Right ventricle myocardium superior (tissue), 1 donor: ENCODE measurements at regions of chr11 and their contacts with region 1.

Region 1: DNA sequence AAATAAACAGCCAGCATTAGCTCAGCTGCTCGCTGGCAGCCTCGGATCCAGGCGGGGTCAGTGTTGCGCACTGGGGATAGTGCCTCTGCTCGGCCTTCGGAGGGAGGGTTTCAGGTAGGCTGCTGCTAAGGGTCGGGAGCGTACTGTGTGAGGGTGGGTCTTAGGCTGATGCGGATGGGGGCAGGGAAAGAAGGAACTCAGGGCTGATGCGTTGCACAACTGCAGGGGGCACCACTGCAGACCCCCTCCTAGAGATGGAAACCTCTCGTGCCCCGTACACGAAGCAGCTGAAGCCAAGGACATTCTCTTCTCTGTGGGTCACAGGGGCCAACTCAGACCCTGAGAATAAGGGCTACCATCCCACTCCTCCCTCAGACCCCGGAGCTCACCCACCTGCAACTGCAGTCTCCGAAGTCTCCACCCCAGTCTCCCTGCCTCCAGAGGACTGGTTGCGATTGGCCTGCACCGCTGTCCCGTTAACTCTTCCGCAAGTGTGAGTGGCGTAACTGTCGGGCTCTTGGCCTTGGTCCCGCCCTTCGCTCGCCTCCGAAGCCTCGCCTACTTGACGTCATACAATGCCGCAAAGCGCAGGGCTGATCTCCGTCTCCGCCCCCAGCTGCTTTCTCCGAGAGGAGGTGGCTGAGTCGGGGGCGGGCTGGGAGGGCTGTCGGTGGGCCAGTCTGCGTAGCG is at the start of gene KBTBD3:
- DNase-seq: peak; percentile 99
- ATAC-seq: peak; percentile 97
- total RNA-seq, gene KBTBD3: 7.6 TPM

Region 2: DNA sequence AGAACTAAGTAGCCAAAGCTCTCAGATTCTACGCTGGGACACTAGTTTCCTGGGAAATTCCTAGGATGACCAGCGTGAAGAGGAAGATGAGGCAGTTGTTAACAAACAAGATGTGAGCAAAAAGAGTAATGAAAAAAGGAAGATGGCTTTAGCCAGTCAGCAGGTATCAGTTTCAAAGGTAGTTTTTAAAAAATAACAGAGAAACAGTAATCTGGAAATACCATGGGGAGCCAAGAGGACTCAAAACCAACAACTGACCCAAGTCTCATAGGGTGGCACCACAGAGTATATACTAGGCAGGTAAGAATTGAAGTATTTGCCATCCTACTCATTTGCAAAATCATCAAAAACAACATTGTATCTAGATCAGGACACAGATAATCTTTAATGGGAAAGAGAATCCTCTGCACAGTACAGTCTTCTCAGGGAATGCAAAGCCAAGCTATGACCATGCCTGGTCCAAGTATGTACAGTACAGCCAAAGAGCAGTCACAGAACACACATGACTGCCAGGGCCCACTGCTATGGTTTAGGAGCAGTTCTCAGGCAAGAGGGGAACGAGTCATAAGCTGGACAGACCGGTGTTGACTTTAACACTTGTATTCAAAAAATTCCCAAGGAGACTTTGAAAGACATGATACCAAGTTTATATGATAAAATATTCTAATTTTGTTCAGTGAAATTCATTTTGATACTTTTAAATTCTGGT is 75.6 kb before region 1 on chr11:
- intact Hi-C with region 1: no loop called
- DNase-seq: no peak
- ATAC-seq: no peak

Region 3: DNA sequence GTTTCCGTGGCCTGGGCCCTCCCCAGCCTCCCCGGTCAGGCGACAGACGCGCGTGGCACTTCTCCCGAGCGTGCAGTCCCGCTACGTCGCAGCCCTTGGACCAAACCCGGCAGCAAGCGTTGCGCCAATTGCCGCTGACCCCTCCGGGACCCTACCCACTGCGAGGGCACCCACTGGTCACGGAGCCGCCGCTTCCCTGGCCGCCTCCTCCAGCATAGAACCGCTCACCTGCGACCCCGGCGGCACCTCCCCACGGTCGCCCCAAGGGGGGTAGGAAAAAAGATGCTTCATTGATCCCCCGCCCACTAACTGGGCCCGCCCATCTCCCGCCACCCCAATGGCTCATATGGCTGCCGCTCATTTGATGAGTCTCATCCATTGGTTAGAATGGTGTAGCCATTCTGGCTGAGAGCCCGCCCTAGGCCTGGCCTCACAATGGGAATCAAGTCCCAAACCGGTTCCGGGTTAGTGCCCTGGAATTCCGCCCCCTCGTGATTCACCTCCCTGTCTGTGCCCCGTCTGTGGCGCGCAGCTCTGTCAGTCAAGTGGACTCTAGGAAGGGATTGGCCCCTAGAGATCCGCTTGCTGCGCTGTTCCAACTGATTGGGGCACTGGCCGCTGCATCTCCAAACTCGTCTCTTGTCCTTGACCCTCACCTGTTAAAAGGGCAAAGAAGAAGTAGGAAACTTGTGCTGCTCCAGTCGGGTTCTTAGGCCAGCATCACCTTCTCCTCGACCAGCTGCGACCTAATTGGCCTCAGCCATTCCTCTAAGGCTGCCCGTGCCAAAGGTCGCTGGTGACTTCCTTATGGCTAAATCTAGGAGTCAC is 54.9 kb before region 1 on chr11 and contains the start of gene MSANTD4:
- intact Hi-C with region 1: loop called (anchors 2 kb)
- DNase-seq: peak; percentile 99
- ATAC-seq: peak; percentile 99
- total RNA-seq, gene MSANTD4: 18.3 TPM